ENCODE measurements at regions of chr17 and their contacts with region 1.

Region 1: DNA sequence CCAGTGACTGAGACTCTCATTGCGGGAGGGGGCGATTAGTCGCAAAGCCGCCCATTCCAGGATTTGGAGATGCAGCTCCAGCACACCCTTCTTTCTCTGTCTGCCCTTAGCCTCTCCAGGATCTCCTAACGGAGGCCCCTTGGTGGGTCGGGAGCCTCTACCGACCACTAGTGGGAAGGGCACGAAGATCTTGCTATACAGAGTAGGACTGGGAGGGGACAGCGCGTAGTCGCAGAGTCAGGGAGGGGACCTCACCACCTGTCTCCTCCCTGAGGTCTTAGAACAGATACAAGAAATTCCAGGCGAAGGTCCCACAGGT is 588 bp upstream of the SMTNL2 start:
- DNase-seq: peak in 1 of 2 donors; percentile 79
- ATAC-seq: peak; percentile 55 to 67 (median 63)
- H3K4me3 ChIP-seq: peak overlapping the region; percentile 81
- H3K27ac ChIP-seq: peak overlapping the region; percentile 99
- H3K4me1 ChIP-seq: peaks cover 20% of the 10 kb centered on the region
- H3K27me3 ChIP-seq: no peaks in the 10 kb centered on the region
- CTCF ChIP-seq: peak; percentile 49

Region 2: GRCh38 chr17:4554997-4555799 is 28.5 kb before region 1 on chr17 and contains the start of gene MYBBP1A:
- intact Hi-C with region 1: no loop called
- DNase-seq: peak; percentile 99
- ATAC-seq: peak; percentile 92 to 98 (median 96)
- H3K4me3 ChIP-seq: peak within 1 kb of the TSS; percentile 87
- H3K27ac ChIP-seq: peak within 1 kb of the TSS; percentile 89
- H3K4me1 ChIP-seq: peaks cover 14% of the 10 kb centered on the region
- H3K27me3 ChIP-seq: no peaks in the 10 kb centered on the region
- CTCF ChIP-seq: peak; percentile 13
- total RNA-seq, gene MYBBP1A: 31.3 to 63.2 (median 46.3) TPM

Region 3: DNA sequence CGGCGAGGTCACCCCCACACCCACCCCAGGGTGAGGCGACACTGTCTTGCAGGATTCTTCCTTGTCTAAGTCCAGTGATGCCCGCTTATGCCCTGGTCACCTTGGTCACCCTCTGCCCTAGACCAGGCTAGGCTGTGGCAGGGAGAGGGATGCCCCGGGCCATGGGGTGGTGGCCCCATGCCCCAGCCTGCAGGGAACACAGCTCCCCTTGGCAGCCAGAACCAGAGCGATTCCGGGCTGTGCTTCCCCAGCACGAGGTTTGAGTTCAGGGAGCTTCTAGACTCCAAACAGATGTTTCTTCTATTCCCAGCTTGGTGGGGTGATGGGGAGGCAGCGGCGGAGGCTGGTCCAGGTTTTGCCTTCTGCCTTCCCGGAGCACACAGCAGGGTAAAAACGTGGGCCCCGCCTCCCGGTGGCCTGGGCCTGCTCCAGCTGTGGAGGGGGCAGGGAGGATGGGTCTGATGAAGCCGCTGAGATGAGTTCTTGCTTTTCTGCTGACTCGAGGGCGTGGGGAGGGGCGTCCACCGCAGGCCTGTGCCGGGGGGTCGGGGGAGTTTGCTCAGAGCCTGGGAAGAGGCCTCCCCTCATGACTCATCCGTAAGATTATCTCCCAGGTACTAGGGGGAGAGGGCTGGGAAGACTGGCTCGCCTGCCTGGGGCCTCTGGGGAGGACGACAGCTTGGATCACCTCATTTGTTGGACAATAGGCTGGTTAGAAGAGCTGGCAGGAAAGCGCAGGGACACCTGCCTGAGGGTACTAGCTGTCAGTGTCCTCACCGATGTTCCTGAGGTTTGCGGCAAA is 16.0 kb after region 1 on chr17:
- intact Hi-C with region 1: loop called in 1 of 2 experiments (anchors 2 kb)
- DNase-seq: peak; percentile 87 to 92
- ATAC-seq: peak; percentile 55 to 66 (median 58)
- H3K4me3 ChIP-seq: peak overlapping the region; percentile 11
- H3K27ac ChIP-seq: peak overlapping the region; percentile 84
- H3K4me1 ChIP-seq: peaks cover 87% of the 10 kb centered on the region
- H3K27me3 ChIP-seq: no peaks in the 10 kb centered on the region
- CTCF ChIP-seq: no peak

Region 4: GRCh38 chr17:4616476-4616875 is 32.7 kb after region 1 on chr17:
- intact Hi-C with region 1: loop called (anchors 5 kb)
- DNase-seq: no peak
- ATAC-seq: peak in 2 of 4 donors; percentile 1 to 12
- H3K4me3 ChIP-seq: no peak overlapping the region
- H3K27ac ChIP-seq: peak overlapping the region; percentile 84
- H3K4me1 ChIP-seq: peaks cover 16% of the 10 kb centered on the region
- H3K27me3 ChIP-seq: no peaks in the 10 kb centered on the region
- CTCF ChIP-seq: no peak

Region 5: DNA sequence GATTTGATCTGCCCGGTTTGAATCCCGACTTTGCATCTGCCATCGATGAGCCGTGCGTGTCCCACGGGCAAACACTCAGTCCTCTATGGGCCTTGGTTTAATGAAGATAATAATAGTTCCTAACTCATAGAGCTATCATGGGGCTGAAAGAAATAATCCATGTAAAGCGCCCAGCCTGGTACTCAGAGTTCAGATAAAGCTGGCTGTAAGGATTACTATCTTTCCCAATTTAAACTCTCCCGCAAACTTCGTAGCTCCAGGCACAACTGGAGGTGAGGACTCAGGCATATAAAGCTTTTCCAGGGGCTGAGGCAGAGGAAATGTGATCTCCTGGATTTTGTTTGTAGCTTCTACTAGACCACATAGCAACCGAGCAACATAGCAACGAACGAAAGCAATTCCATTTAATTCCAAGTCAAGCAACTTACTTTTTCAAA is 41.5 kb after region 1 on chr17:
- intact Hi-C with region 1: loop called in 1 of 2 experiments (anchors 5 kb)
- DNase-seq: no peak
- ATAC-seq: peak; percentile 69 to 85 (median 84)
- H3K4me3 ChIP-seq: no peak overlapping the region
- H3K27ac ChIP-seq: peak overlapping the region; percentile 82
- H3K4me1 ChIP-seq: peaks cover 13% of the 10 kb centered on the region
- H3K27me3 ChIP-seq: no peaks in the 10 kb centered on the region
- CTCF ChIP-seq: no peak

Measured in psoas muscle (tissue), 8 donors.